ENCODE measurements at regions of chr11 and their contacts with region 1.

Region 1: DNA sequence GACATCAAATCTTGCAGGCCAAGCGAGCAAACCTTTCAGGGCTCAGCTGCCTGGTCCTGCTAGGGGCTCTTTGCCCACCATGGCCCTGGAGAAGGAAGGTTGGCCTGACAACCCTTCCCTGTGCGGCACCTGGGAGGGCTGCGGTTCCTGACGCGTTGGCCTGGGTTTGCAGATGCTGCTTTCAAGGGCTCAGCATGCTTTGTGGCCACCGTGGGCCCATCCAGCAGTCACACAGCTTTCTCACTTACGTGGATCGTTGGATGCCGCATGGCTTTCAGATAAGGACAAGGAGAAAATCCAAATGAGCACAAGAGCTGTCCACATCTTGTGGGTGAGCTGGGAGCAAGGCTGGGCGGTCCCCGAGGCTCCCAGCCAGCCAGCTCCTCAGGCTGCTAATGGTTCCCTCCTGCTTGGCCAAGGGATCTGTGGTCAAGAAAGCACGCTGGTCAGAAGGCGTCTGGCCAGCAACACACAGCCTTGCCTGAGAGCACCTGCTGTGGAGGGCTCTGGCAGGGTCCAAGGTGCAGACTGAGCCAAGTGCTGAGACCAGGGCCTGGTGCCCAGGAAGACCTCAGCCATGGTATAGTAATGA is 8.2 kb downstream of the C11orf24 start:
- DNase-seq: no peak
- H3K4me3 ChIP-seq: no peak overlapping the region
- H3K27ac ChIP-seq: no peak overlapping the region
- H3K4me1 ChIP-seq: no peaks in the 10 kb centered on the region
- H3K27me3 ChIP-seq: no peaks in the 10 kb centered on the region
- CTCF ChIP-seq: no peak
- POLR2A ChIP-seq: no peak

Region 2: GRCh38 chr11:68441466-68442230 is 178.1 kb after region 1 on chr11:
- intact Hi-C with region 1: loop called (anchors 5 kb)
- DNase-seq: no peak
- H3K4me3 ChIP-seq: no peak overlapping the region
- H3K27ac ChIP-seq: no peak overlapping the region
- H3K4me1 ChIP-seq: no peaks in the 10 kb centered on the region
- H3K27me3 ChIP-seq: no peaks in the 10 kb centered on the region
- CTCF ChIP-seq: no peak
- POLR2A ChIP-seq: no peak